ENCODE measurements at regions of chr15 and their contacts with region 1.

Region 1: GRCh38 chr15:76139368-76140073 is 79.7 kb downstream of the TMEM266 start:
- DNase-seq: peak; percentile 47 to 69
- H3K4me3 ChIP-seq: no peak overlapping the region
- H3K27ac ChIP-seq: no peak overlapping the region
- H3K4me1 ChIP-seq: no peaks in the 10 kb centered on the region
- H3K27me3 ChIP-seq: peaks cover 13% of the 10 kb centered on the region; the same call in 1 of the 2 replicates
- CTCF ChIP-seq: peak; percentile 95

Region 2: GRCh38 chr15:75928680-75929608 is 210.6 kb before region 1 on chr15:
- CTCF ChIA-PET with region 1: interaction called, 6 read pairs
- POLR2A ChIA-PET with region 1: no interaction called
- intact Hi-C with region 1: loop called (anchors 5 kb)
- DNase-seq: no peak
- H3K4me3 ChIP-seq: no peak overlapping the region
- H3K27ac ChIP-seq: no peak overlapping the region
- H3K4me1 ChIP-seq: no peaks in the 10 kb centered on the region
- H3K27me3 ChIP-seq: no peaks in the 10 kb centered on the region
- CTCF ChIP-seq: peak; percentile 47

Region 3: GRCh38 chr15:76057332-76058000 is 82.1 kb before region 1 on chr15:
- CTCF ChIA-PET with region 1: interaction called, 68 read pairs
- POLR2A ChIA-PET with region 1: interaction called, 7 read pairs
- intact Hi-C with region 1: loop called (anchors 1 kb)
- DNase-seq: peak; percentile 15 to 43
- H3K4me3 ChIP-seq: peak overlapping the region; percentile 27; the same call in 1 of the 2 replicates
- H3K27ac ChIP-seq: no peak overlapping the region
- H3K4me1 ChIP-seq: peaks cover 16% of the 10 kb centered on the region
- H3K27me3 ChIP-seq: peaks cover 21% of the 10 kb centered on the region; the same call in 1 of the 2 replicates
- CTCF ChIP-seq: peak; percentile 89

Measured in PC-9 (cell line).